Right ventricle myocardium superior (tissue), 1 donor: ENCODE measurements at regions of chr6 and their contacts with region 1.

Region 1: DNA sequence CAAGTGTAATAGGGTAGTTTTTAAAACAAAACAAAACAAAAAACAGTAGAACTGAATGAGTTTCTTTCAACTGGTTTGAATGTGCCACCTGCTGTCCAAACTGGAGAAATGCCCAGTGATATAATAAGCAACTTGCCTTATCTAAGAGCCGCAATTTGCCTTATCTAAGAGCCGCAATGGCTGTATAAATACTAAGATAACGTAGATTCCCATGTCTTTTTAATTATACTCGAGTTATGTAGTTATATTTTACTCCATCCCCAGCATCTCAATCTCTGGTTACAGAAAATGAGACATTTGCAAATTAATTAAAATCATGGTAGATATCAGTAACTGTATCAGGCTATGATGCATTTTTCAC is 67.2 kb downstream of the RPP40 start:
- DNase-seq: no peak
- ATAC-seq: peak; percentile 36

Region 2: GRCh38 chr6:4313044-4313686 is 623.5 kb before region 1 on chr6:
- intact Hi-C with region 1: loop called (anchors 10 kb)
- DNase-seq: no peak
- ATAC-seq: peak; percentile 71

Region 3: GRCh38 chr6:4620284-4621151 is 316.1 kb before region 1 on chr6:
- intact Hi-C with region 1: no loop called
- DNase-seq: no peak
- ATAC-seq: no peak